ENCODE measurements at regions of chr14 and their contacts with region 1.

Region 1: GRCh38 chr14:32252030-32252670 is 49.1 kb upstream of the RNU6-8 start:
- DNase-seq: peak; percentile 69
- H3K4me3 ChIP-seq: no peak overlapping the region
- H3K27ac ChIP-seq: no peak overlapping the region
- H3K4me1 ChIP-seq: no peaks in the 10 kb centered on the region
- H3K27me3 ChIP-seq: no peaks in the 10 kb centered on the region
- CTCF ChIP-seq: peak; percentile 73 to 82
- POLR2A ChIP-seq: no peak

Region 2: GRCh38 chr14:31449971-31450610 is 802.1 kb before region 1 on chr14:
- CTCF ChIA-PET with region 1: interaction called, 17 read pairs
- POLR2A ChIA-PET with region 1: no interaction called
- dilution Hi-C with region 1: no loop called
- intact Hi-C with region 1: no loop called
- DNase-seq: peak; percentile 66
- H3K4me3 ChIP-seq: no peak overlapping the region
- H3K27ac ChIP-seq: no peak overlapping the region
- H3K4me1 ChIP-seq: peaks cover 10% of the 10 kb centered on the region
- H3K27me3 ChIP-seq: no peaks in the 10 kb centered on the region
- CTCF ChIP-seq: peak; percentile 21 to 42
- POLR2A ChIP-seq: no peak

Region 3: GRCh38 chr14:31510222-31510621 is 741.9 kb before region 1 on chr14:
- CTCF ChIA-PET with region 1: interaction called, 215 read pairs
- POLR2A ChIA-PET with region 1: no interaction called
- dilution Hi-C with region 1: no loop called
- intact Hi-C with region 1: loop called (anchors 1 kb)
- DNase-seq: peak; percentile 38
- H3K4me3 ChIP-seq: no peak overlapping the region
- H3K27ac ChIP-seq: no peak overlapping the region
- H3K4me1 ChIP-seq: no peaks in the 10 kb centered on the region
- H3K27me3 ChIP-seq: peaks cover 1 to 2% of the 10 kb centered on the region in 2 experiments
- CTCF ChIP-seq: peak; percentile 13 to 22
- POLR2A ChIP-seq: no peak

Region 4: DNA sequence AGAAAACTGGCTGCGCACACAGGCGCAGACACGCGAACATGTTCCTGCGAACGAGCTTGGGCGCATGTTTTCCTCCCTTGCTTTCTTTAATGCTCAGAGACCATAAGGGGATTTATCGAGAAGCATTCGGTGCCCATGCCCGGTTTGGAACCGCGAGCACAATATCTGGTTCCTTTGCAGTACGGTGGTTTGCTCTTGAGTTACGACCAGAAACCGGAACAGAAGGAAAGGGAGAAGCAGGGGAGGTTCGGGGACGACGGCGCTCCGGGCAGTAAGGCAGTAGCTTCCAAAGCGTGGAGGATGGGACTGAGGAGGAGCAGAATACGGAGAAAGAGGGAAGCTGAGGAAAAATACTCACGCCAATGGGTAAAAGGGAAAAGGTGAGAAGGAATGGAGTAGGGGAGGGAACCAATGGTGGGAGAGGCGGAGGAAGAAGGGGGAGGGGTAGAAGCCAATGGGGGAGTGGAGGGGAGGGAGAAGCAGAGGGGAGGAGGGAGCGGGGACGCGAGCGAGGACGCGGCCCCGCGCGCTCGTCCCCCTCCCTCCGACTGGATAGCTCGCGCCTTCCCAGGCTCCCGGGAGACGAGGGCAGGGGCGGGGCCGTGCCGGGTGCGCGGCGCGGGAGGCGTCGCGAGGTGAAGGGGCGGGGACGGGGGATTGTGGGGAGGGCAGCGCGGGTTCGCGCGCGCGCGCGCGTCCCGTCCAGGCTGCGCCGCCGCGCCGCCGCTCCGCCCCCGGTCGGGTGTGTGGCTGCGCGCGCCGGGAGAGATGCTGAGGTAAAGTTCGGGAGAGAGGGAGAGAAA is 175.7 kb before region 1 on chr14:
- CTCF ChIA-PET with region 1: interaction called, 151 read pairs
- POLR2A ChIA-PET with region 1: no interaction called
- dilution Hi-C with region 1: no loop called
- intact Hi-C with region 1: loop called (anchors 1 kb)
- DNase-seq: peak; percentile 94
- H3K4me3 ChIP-seq: peak overlapping the region; percentile 56 to 77 (median 72)
- H3K27ac ChIP-seq: peak overlapping the region; percentile 53
- H3K4me1 ChIP-seq: peaks cover 17% of the 10 kb centered on the region
- H3K27me3 ChIP-seq: peaks cover 2 to 4% of the 10 kb centered on the region in 2 experiments
- CTCF ChIP-seq: no peak
- POLR2A ChIP-seq: peak; percentile 28

Region 5: DNA sequence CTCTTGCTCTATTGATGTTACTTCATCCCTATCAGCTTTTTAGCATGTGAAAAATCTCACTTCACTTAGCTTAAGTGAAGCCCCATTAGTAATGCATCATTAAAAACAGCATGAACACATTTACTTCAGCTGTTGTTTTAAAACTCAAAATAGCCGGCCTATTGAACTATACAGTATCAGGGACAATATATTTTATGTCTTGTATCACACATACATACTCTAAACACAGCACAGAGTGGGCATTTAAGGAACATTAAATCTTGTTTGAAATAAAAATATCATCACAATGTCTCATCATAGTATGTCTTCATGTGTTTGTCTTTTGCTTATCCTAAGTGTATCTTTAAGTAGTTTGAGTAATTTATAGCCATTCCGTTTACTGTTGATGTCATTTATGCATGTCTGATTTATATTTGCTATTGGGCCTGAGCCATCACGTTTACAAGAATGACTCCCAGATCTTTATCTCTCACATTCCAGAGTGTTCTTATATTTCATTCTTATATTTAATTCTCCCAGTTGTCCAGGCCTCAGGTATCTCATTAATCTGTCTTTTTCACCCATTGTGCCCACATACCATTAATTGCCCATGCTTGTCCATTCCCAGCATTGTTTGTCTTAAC is 117.6 kb before region 1 on chr14:
- CTCF ChIA-PET with region 1: no interaction called
- POLR2A ChIA-PET with region 1: no interaction called
- dilution Hi-C with region 1: no loop called
- intact Hi-C with region 1: no loop called
- DNase-seq: peak; percentile 32
- H3K4me3 ChIP-seq: no peak overlapping the region
- H3K27ac ChIP-seq: no peak overlapping the region
- H3K4me1 ChIP-seq: no peaks in the 10 kb centered on the region
- H3K27me3 ChIP-seq: no peaks in the 10 kb centered on the region
- CTCF ChIP-seq: no peak
- POLR2A ChIP-seq: no peak

Region 6: DNA sequence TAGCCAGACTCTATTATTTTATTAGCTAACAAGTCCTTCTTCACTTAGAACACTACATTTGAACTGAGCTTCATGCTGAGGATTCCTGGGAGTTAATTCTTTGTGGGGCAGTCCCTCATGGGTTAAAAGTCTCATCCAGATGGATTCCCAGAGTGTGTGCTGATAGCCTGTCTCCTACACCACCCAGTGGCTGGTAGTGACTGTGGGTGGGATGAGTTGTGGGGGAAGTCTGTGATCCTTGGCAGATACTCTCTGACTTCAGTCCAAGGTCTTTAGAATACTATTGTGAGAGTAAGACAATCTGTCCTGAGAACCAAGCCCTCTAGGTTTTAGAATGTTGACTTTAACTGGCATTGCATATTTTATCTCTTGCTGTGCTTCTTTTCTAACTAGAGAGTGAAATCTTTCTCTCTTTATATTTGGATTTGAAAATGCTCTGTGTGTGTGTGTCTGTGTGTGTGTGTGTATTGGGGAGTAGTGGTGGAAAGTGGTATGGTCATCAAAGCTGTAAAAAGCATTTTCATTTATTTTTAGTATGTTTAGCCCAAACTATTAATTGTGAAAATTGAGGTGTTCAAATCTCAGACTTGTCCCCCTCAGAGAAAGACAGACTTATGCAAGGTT is 114.2 kb after region 1 on chr14:
- CTCF ChIA-PET with region 1: no interaction called
- POLR2A ChIA-PET with region 1: no interaction called
- dilution Hi-C with region 1: no loop called
- intact Hi-C with region 1: no loop called
- DNase-seq: no peak
- H3K4me3 ChIP-seq: no peak overlapping the region
- H3K27ac ChIP-seq: no peak overlapping the region
- H3K4me1 ChIP-seq: peaks cover 7% of the 10 kb centered on the region
- H3K27me3 ChIP-seq: peaks cover 2 to 3% of the 10 kb centered on the region in 2 experiments
- CTCF ChIP-seq: no peak
- POLR2A ChIP-seq: no peak

Region 7: GRCh38 chr14:32469388-32470160 is 217.4 kb after region 1 on chr14:
- CTCF ChIA-PET with region 1: interaction called, 152 read pairs
- POLR2A ChIA-PET with region 1: no interaction called
- dilution Hi-C with region 1: no loop called
- intact Hi-C with region 1: loop called (anchors 1 kb)
- DNase-seq: peak; percentile 62
- H3K4me3 ChIP-seq: no peak overlapping the region
- H3K27ac ChIP-seq: no peak overlapping the region
- H3K4me1 ChIP-seq: peaks cover 3% of the 10 kb centered on the region
- H3K27me3 ChIP-seq: no peaks in the 10 kb centered on the region
- CTCF ChIP-seq: peak; percentile 17 to 36
- POLR2A ChIP-seq: no peak

Measured in endothelial cell of umbilical vein (primary cell).